PC-9 (cell line): ENCODE measurements at regions of chr16 and their contacts with region 1.

Region 1: DNA sequence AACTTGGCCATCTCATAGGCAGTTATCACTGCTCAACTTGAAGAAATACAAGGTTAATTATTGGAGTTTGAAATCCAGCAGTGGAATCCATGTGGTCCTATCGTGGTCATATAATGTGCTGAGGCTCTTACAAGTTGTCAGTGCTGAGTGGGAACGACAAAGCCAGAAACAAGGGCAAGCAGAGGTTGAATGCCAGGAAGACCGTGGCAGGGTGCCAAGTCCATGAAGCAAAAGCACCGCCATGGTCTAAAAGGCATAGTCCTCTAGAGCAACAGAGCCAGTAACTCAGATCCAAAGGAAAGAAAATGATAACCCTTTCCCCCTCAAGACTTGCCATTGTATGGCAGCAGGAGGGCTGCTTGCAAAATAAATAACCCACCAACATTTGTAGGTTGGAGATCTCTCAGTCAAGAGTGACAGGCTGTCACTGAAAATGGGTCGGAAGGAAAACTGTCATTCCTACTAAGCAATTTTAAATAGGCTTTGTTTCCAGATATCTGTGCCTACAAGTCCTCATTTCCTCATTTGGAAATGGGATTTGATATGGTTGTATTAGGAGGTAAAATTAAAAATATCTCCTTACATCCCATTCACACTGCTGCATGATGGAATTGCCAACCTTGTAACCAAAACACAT is 36.4 kb upstream of the HSBP1 start:
- DNase-seq: no peak
- H3K4me3 ChIP-seq: no peak overlapping the region
- H3K27ac ChIP-seq: no peak overlapping the region
- H3K4me1 ChIP-seq: no peaks in the 10 kb centered on the region
- H3K27me3 ChIP-seq: peaks cover 89% of the 10 kb centered on the region
- CTCF ChIP-seq: no peak

Region 2: GRCh38 chr16:83666449-83666848 is 105.0 kb before region 1 on chr16:
- CTCF ChIA-PET with region 1: no interaction called
- POLR2A ChIA-PET with region 1: no interaction called
- intact Hi-C with region 1: no loop called
- DNase-seq: no peak
- H3K4me3 ChIP-seq: no peak overlapping the region
- H3K27ac ChIP-seq: no peak overlapping the region
- H3K4me1 ChIP-seq: no peaks in the 10 kb centered on the region
- H3K27me3 ChIP-seq: no peaks in the 10 kb centered on the region; the same call in 1 of the 2 replicates
- CTCF ChIP-seq: no peak

Region 3: DNA sequence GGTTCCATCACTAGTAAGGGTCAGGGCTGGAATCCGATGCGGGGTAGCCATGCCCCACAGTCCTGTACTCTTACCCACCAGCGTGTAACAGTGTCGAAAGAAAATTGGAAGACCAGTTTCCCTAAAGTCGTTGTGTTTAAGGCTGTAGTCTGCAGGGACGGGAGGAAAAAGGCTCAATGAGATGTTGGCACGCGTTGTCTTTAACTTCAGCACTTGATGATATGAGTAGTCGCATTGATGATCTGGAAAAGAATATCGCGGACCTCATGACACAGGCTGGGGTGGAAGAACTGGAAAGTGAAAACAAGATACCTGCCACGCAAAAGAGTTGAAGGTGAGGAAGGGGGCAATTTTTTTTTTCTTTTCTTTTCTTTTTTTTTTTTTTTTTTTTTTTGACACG is 37.7 kb after region 1 on chr16:
- CTCF ChIA-PET with region 1: interaction called, 10 read pairs
- POLR2A ChIA-PET with region 1: no interaction called
- intact Hi-C with region 1: no loop called
- DNase-seq: no peak
- H3K4me3 ChIP-seq: peak overlapping the region; percentile 65
- H3K27ac ChIP-seq: no peak overlapping the region
- H3K4me1 ChIP-seq: peaks cover 22% of the 10 kb centered on the region
- H3K27me3 ChIP-seq: no peaks in the 10 kb centered on the region
- CTCF ChIP-seq: no peak